GM10248 (cell line): ENCODE measurements at regions of chr15 and their contacts with region 1.

Region 1: DNA sequence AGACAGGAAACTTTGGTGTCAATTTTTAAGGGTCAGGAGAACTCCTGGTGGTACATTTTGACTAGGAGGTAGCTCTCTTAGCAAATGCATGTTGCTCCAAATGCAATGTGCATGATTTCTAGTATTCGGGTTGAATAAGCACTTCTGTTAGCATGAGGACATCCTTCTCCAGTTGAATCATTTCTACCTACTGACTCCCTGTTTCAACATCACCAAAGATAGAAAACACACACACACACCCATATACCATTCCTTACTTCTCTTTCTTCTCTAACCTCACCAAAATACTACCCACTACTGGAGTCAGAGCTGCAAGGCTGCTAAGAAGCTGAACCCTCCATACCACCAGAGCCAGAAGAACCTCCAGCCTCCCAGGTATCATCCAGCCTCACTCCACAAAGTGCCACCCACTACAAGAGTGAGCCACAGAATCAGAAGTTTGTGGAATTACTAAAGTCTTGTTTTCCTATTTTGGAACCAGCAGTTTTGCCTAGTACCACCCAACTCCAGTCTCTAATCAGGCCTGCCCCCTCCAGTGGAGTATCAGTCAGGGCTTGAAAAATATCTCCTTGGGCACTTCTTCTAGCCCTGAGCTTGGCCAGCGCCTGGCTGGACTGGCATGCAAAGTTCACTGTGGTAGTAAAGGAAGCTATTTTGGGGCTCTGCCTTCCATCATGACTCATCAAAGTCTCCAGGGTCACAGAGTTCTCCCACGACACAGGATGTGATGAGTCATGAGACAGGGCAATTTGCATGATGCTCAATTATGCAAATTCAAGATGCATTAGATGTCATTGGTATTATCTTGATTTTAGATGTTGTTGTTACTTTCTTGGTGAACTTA is 110.2 kb downstream of the CYP19A1 start:
- DNase-seq: peak; percentile 72
- CTCF ChIP-seq: no peak

Region 2: GRCh38 chr15:51239748-51240465 is 11.7 kb after region 1 on chr15:
- CTCF ChIA-PET with region 1: interaction called, 32 read pairs
- POLR2A ChIA-PET with region 1: no interaction called
- DNase-seq: no peak
- CTCF ChIP-seq: no peak

Region 3: DNA sequence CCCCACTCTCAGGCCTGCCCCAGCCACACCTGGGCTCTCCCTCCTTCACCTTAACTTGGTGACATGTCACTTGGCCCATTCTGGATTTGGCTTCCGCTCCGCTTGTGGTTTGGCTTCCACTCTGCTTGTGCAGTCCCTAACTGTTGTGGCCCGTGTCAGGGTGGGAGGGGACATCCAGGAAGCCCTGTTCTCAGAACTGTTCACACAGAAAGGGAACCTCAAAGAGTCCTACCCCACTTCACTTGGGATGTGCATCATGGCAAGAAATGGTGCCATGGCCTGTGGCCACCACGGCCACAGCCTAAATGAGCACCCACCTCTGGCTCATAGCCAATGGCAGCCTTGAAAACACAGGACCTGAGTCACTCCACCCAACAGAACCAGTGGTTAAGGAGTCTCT is 46.8 kb after region 1 on chr15:
- CTCF ChIA-PET with region 1: no interaction called
- POLR2A ChIA-PET with region 1: no interaction called
- DNase-seq: no peak
- CTCF ChIP-seq: no peak

Region 4: DNA sequence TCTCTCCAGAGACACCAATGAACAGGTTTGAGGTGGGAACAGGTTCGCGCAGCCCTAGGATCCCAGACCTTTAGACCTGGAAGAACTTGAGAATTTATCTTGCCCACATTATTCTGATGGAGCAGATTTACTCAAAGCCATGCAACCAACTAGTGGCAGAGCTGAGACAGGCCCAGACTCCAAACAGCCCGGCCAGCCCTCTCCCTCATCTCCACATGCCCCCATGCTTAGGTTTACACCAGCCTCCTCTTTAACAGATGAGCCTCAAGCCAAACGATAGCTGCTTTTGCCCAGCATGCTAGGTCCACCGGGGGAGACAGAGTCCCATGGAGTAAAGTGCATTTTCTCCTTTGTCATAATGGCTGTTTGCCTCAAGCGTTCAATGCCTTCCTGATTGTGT is 68.9 kb after region 1 on chr15:
- CTCF ChIA-PET with region 1: no interaction called
- POLR2A ChIA-PET with region 1: no interaction called
- DNase-seq: no peak
- CTCF ChIP-seq: no peak

Region 5: DNA sequence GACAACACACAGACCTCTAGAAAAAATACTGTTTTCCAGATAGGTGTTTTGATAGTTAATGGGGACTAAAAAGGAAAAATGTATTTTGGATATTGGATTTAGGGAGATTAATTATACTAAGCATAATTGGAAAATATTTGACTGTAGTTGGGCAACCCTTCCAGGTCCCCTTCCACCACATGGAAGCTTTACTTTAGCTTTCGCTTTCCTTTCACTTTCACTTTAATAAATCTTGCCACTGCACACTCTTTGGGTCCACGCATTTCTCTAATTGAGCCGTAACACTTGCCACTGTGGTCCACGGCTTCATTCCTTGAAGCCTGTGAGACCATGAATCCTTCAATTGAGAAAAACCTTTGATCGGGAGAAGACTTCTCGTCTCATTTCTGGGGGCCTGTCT is 128.8 kb after region 1 on chr15:
- CTCF ChIA-PET with region 1: no interaction called
- POLR2A ChIA-PET with region 1: no interaction called
- DNase-seq: no peak
- CTCF ChIP-seq: no peak

Region 6: GRCh38 chr15:51380999-51381795 is 153.0 kb after region 1 on chr15:
- CTCF ChIA-PET with region 1: interaction called, 14 read pairs
- POLR2A ChIA-PET with region 1: no interaction called
- DNase-seq: peak; percentile 77
- CTCF ChIP-seq: peak; percentile 89